ENCODE measurements at regions of chr1 and their contacts with region 1.

Region 1: DNA sequence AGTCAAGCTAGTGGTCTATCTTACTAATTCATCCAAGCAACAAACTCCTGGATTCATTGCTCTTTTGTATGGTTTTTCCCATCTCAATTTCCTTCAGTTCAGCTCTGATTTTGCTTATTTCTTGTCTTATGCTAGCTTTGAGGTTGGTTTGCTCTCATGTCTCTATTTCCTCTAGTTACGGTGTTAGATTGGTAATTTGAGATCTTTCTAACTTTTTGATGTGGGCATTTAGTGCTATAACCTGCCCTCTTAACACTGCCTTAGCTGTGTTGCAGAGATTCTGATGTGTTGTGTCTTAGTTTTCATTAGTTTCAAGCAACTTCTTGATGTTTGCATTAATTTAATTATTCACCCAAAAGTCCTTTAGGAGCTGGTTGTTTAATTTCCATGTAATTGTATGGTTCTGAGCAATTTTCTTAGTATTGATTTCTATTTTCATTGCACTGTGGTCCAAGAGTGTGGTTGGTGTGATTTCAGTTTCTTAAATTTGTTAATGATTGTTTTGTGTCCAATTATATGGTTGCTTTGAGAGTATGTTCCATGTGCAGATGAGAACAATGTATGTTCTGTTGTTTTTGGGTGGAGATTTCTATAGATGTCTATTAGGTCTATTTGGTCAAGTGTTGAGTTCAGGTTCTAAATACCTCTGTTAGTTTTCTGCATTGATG is 154.6 kb downstream of the PLPPR5 start:
- DNase-seq: no peak
- ATAC-seq: no peak
- H3K4me3 ChIP-seq: no peak overlapping the region
- H3K27ac ChIP-seq: no peak overlapping the region
- H3K4me1 ChIP-seq: no peaks in the 10 kb centered on the region
- H3K27me3 ChIP-seq: no peaks in the 10 kb centered on the region
- CTCF ChIP-seq: no peak

Region 2: DNA sequence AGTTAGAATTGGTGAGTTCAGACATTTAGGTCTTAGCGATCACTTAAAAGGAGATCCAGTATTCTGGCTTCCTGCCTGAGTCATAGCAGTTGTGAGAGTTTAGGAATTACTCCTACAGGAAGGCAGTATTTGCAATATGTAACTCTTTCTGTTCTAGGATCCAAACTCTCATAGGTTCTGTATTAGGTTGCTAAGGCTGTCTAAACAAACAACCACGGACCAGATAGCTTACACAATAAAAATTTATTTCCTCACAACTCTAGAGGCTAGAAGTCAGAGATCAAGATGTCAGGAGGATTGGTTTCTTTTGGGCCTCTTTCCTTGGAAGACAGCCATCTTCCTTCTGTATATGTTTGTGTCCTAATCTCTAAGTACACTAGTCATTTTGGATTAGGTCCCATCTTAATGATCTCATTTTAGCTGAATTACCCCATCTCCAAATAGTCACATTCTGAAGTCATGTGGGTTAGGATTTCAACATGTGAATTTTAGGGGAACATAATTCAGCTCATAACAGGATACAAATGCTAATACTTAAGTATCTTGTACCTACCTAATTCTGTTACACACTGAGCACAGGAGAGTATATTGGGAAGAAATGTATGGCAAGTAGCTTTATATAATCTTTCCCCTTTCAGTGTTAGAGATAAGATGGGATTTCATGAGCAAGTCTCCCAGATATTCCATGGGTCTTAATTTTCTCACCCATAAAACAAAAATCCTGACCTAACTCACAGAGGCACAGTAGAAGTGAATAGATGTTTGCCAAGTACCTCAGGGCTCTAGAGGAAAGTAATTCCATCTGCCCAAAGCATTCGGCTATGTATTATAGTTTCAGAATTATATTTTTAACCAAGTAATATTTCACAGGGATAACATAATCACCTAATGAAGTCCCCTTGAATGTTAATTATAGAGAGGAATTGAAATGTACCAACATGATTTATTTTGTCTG is 1984.1 kb before region 1 on chr1:
- CTCF ChIA-PET with region 1: interaction called, 13 read pairs
- POLR2A ChIA-PET with region 1: no interaction called
- in situ Hi-C with region 1: no loop called
- intact Hi-C with region 1: no loop called
- DNase-seq: no peak
- ATAC-seq: no peak
- H3K4me3 ChIP-seq: no peak overlapping the region
- H3K27ac ChIP-seq: no peak overlapping the region
- H3K4me1 ChIP-seq: no peaks in the 10 kb centered on the region
- H3K27me3 ChIP-seq: no peaks in the 10 kb centered on the region
- CTCF ChIP-seq: no peak